ENCODE measurements at regions of chr14 and their contacts with region 1.

Region 1: GRCh38 chr14:91350813-91351511 is 66.7 kb downstream of the CCDC88C start:
- DNase-seq: peak in 8 of 10 donors; percentile 58 to 83 (median 72)
- ATAC-seq: peak; percentile 67 to 72
- H3K4me3 Mint-ChIP-seq: peak overlapping the region; percentile 74 to 93 (median 88)
- H3K27ac Mint-ChIP-seq: peak overlapping the region; percentile 94 to 99 (median 96)
- H3K4me1 Mint-ChIP-seq: peaks cover 64 to 97% (median 93%) of the 10 kb centered on the region in 4 donors
- H3K27me3 Mint-ChIP-seq: no peaks in the 10 kb centered on the region

Region 2: GRCh38 chr14:91332151-91332985 is 18.6 kb before region 1 on chr14:
- POLR2A ChIA-PET with region 1: interaction called, 41 read pairs
- DNase-seq: no peak
- ATAC-seq: no peak
- H3K4me3 Mint-ChIP-seq: peak overlapping the region; percentile 10 to 80 (median 66)
- H3K27ac Mint-ChIP-seq: peak overlapping the region; percentile 84 to 99 (median 97)
- H3K4me1 Mint-ChIP-seq: peaks cover 57 to 84% (median 65%) of the 10 kb centered on the region in 4 donors
- H3K27me3 Mint-ChIP-seq: no peaks in the 10 kb centered on the region

Region 3: GRCh38 chr14:91373591-91374254 is 22.8 kb after region 1 on chr14:
- POLR2A ChIA-PET with region 1: interaction called, 200 read pairs
- DNase-seq: peak in 4 of 10 donors; percentile 45 to 57 (median 52)
- ATAC-seq: peak; percentile 33 to 51
- H3K4me3 Mint-ChIP-seq: peak overlapping the region; percentile 76 to 96 (median 85)
- H3K27ac Mint-ChIP-seq: peak overlapping the region; percentile 85 to 98 (median 94)
- H3K4me1 Mint-ChIP-seq: peaks cover 67 to 99% (median 99%) of the 10 kb centered on the region in 4 donors
- H3K27me3 Mint-ChIP-seq: no peaks in the 10 kb centered on the region

Region 4: DNA sequence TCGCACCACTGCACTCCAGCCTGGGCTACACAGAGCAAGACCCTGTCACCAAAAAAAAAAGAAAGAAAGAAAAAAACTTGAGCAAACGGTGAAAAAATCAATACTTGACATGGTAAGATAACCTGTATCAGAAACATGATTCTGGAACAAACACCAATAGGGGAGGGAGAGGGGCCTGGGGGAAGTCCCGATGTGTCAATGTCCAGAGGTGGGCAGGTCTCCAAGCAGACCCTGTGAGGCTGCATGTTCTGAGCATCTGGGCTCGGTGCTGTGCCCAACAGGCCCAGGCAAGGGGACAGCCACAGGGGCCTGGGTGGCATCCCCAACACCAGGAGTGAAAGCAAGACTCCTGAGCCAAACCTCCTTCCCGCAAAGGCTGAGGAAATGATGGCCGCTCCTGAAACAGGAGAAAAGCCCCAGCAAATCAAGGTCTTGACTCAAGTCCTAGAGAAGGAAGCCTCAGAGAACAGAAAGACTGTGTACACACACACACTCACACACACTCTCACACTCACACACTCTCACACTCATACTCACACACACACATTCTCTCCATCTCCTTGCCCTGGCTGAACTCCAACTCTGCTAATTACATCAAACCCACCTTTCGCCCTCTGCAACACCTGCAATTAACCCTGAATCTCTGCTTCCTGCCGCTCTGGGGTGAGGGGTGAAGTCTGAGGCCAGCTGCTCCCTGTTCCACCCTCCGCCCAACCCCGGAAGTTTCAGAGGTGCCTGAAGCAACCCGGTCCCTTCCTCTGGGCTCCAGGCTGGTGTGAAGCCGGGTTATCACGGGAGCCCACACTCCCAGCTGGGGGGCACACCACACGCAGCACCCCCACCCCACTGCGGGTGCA is 46.2 kb after region 1 on chr14:
- POLR2A ChIA-PET with region 1: interaction called, 80 read pairs
- DNase-seq: peak; percentile 36 to 78 (median 58)
- ATAC-seq: peak; percentile 46 to 75
- H3K4me3 Mint-ChIP-seq: peak overlapping the region; percentile 72 to 99 (median 82)
- H3K27ac Mint-ChIP-seq: peak overlapping the region; percentile 79 to 99 (median 94)
- H3K4me1 Mint-ChIP-seq: peaks cover 57 to 99% (median 97%) of the 10 kb centered on the region in 4 donors
- H3K27me3 Mint-ChIP-seq: no peaks in the 10 kb centered on the region

Region 5: GRCh38 chr14:91418387-91419043 is 67.6 kb after region 1 on chr14:
- POLR2A ChIA-PET with region 1: interaction called, 190 read pairs
- DNase-seq: peak in 9 of 10 donors; percentile 65 to 88 (median 79)
- ATAC-seq: peak; percentile 11 to 23
- H3K4me3 Mint-ChIP-seq: peak overlapping the region; percentile 78 to 98 (median 86)
- H3K27ac Mint-ChIP-seq: peak overlapping the region; percentile 84 to 98 (median 93)
- H3K4me1 Mint-ChIP-seq: peaks cover 19 to 56% (median 39%) of the 10 kb centered on the region in 4 donors
- H3K27me3 Mint-ChIP-seq: peaks cover 0 to 2% (median 0%) of the 10 kb centered on the region in 5 donors

Region 6: DNA sequence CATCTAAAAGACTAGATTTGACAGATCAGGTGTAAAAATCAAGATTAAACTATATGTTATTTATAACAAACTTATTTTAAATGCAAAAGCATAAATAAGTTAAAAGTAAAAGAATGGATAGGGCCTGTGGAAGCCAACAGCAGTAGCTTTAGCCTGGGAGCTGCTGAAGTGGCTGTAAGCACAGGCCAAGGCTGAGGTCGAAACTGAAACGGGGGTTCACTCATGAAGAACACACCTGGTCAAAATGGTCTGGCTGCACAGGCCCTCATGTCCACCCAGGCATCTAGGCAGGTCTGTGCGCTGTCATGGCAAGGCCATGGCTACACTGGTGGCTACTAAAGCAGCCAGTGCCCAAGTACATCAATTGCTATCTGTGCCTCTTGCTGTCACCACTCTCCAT is 357.8 kb after region 1 on chr14:
- POLR2A ChIA-PET with region 1: no interaction called
- DNase-seq: no peak
- ATAC-seq: no peak
- H3K4me3 Mint-ChIP-seq: no peak overlapping the region
- H3K27ac Mint-ChIP-seq: no peak overlapping the region
- H3K4me1 Mint-ChIP-seq: no peaks in the 10 kb centered on the region
- H3K27me3 Mint-ChIP-seq: no peaks in the 10 kb centered on the region

Measured in naive thymus-derived CD8-positive, alpha-beta T cell (primary cell).